MCF 10A (cell line): ENCODE measurements at regions of chr10 and their contacts with region 1.

Region 1: GRCh38 chr10:113563306-113564088 is 10.6 kb downstream of the HABP2 start:
- DNase-seq: peak; percentile 71
- H3K4me3 Mint-ChIP-seq: peak overlapping the region; percentile 70
- H3K27ac Mint-ChIP-seq: no peak overlapping the region
- H3K4me1 Mint-ChIP-seq: peaks cover 4% of the 10 kb centered on the region
- H3K27me3 Mint-ChIP-seq: peaks cover 12% of the 10 kb centered on the region
- CTCF ChIP-seq: peak; percentile 97

Region 2: DNA sequence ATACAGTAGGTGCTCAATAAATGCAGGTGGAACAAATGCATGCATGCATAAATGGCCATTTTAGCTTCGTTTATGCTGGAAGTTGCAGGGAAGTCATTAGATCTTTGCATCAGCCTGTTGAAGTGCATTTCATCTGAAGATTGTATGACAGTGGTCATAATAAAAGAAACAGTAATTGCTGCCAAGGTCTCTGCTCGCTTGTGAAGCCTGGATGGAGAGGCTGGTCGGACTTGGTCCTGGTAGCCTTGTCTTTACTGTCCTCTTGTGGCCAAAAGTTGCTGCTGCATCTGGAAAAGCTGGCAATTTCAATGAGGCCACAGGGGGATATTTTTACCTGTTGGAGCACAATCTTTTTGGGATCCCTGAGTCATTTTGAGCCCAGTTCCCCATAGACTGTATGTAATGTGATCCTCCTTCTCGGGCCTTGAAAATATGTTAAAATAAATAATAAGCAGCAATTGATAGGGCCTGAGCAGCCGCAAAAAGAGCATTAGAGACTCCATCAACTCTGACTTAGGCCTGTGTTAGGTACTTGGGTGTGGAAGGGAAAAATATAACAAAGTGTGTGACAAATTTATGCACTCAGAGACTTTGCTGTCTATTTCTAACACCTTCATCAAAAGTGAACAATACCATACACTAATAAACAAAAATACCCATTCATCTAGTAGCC is 42.2 kb before region 1 on chr10:
- CTCF ChIA-PET with region 1: interaction called, 13 read pairs
- POLR2A ChIA-PET with region 1: no interaction called
- intact Hi-C with region 1: loop called (anchors 1 kb)
- DNase-seq: peak; percentile 69
- H3K4me3 Mint-ChIP-seq: no peak overlapping the region
- H3K27ac Mint-ChIP-seq: no peak overlapping the region
- H3K4me1 Mint-ChIP-seq: no peaks in the 10 kb centered on the region
- H3K27me3 Mint-ChIP-seq: peaks cover 35% of the 10 kb centered on the region
- CTCF ChIP-seq: peak; percentile 96

Region 3: DNA sequence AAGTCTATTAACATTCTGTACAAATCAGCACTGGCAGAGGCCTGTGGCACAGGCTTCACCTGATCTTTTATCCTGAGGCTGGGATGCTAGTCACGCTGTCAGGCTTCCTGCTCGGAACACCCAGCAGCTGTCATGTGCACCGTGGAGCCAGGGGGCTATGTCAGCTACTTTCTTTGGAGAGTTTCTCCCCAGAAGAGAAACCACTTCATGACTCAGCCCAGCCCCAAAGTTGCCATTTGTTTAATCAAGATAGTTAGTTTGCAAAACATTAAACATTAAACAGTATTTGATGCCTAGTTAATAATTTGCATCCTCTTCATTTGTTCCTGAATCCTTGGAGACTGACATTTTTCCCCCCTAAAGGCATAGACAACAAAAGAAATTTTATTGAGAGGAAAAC is 10.8 kb before region 1 on chr10 and contains the start of gene HABP2:
- CTCF ChIA-PET with region 1: interaction called, 17 read pairs
- POLR2A ChIA-PET with region 1: no interaction called
- intact Hi-C with region 1: no loop called
- DNase-seq: no peak
- H3K4me3 Mint-ChIP-seq: no peak within 1 kb of the TSS
- H3K27ac Mint-ChIP-seq: no peak within 1 kb of the TSS
- H3K4me1 Mint-ChIP-seq: no peaks in the 10 kb centered on the region
- H3K27me3 Mint-ChIP-seq: peaks cover 30% of the 10 kb centered on the region
- CTCF ChIP-seq: no peak
- total RNA-seq, gene HABP2: not detected in 2 replicates